Psoas muscle (tissue), 8 donors: ENCODE measurements at regions of chr10 and their contacts with region 1.

Region 1: DNA sequence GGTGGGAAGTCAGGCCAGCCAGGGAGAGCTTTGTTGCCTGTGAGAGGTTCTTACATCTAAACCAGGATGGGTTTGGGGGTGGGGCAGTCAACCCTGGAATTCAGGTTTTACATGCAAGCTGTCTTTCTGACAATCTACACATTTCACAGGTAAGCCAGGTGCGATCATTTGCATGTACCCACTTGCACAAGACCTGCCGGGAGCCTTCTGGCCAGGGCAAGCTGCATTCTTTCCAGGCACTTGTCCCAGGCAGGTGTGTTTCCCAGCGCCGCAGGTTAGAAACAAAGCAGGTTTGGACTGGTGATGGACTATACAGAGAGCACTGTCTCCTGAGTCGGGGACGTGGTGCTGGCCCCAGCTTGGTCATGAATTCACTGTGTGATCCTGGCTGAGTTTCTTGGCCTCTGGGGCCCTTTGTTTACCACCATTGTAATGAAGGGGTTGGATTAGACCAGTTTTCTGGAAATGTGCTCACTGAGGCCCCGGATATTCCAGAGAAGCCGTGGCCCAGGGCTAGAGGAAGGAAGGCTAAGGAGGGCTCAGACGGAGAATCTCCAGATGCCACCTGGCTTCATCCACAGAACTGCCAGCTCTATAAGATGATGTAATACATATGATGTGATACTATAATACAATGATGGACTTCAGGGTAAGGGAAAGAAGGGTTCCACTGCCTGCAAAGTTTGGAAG is 205.2 kb upstream of the SVIL start:
- DNase-seq: no peak
- ATAC-seq: no peak
- H3K4me3 ChIP-seq: no peak overlapping the region
- H3K27ac ChIP-seq: peak overlapping the region; percentile 6
- H3K4me1 ChIP-seq: peaks cover 25% of the 10 kb centered on the region
- H3K27me3 ChIP-seq: no peaks in the 10 kb centered on the region
- CTCF ChIP-seq: no peak

Region 2: GRCh38 chr10:29239569-29240472 is 600.1 kb before region 1 on chr10:
- intact Hi-C with region 1: loop called in 1 of 2 experiments (anchors 10 kb)
- DNase-seq: no peak
- ATAC-seq: peak in 1 of 4 donors; percentile 49
- H3K4me3 ChIP-seq: no peak overlapping the region
- H3K27ac ChIP-seq: no peak overlapping the region
- H3K4me1 ChIP-seq: no peaks in the 10 kb centered on the region
- H3K27me3 ChIP-seq: no peaks in the 10 kb centered on the region
- CTCF ChIP-seq: peak; percentile 33

Region 3: DNA sequence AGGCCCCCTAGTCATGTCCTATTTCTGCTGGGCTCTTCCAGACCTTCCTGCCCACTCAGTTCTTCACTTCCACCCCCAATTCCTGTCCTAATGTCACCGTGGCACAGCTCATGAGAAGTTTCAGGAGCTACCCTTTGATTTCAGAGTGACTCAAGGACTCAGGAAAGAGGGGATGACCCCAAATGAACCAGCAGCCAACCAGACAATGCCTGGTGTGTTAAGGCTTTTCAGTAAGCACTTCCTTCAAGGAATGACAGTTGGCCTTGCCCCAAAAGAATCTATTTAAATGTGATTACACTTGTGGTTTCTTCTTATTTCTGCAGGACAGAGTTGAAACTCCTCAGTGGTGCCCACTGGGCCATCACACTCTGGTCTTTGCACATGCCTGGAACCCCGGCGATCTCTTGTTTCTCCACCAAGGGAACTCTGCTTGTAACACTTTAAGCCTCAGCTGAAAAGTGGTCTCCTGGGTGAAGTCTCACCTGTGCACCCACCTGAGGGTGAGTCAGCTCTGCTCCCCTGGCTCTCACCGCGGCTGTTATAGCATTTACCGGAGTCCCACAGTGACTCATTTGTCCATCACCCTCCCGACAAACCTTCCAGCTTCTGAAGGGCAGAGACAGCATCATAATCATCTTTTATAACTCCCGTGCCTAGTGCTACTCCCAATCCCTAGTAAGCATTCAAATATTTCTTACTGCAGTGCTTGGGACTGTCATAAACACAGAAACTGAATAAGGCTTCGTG is 82.2 kb before region 1 on chr10:
- intact Hi-C with region 1: no loop called
- DNase-seq: no peak
- ATAC-seq: no peak
- H3K4me3 ChIP-seq: no peak overlapping the region
- H3K27ac ChIP-seq: no peak overlapping the region
- H3K4me1 ChIP-seq: no peaks in the 10 kb centered on the region
- H3K27me3 ChIP-seq: no peaks in the 10 kb centered on the region
- CTCF ChIP-seq: no peak

Region 4: GRCh38 chr10:29895456-29895855 is 55.5 kb after region 1 on chr10:
- intact Hi-C with region 1: no loop called
- DNase-seq: peak; percentile 60 to 71
- ATAC-seq: peak in 3 of 4 donors; percentile 45 to 62 (median 60)
- H3K4me3 ChIP-seq: no peak overlapping the region
- H3K27ac ChIP-seq: no peak overlapping the region
- H3K4me1 ChIP-seq: no peaks in the 10 kb centered on the region
- H3K27me3 ChIP-seq: no peaks in the 10 kb centered on the region
- CTCF ChIP-seq: no peak

Region 5: GRCh38 chr10:30359373-30360206 is 519.6 kb after region 1 on chr10:
- intact Hi-C with region 1: no loop called
- DNase-seq: peak in 1 of 2 donors; percentile 50
- ATAC-seq: peak in 3 of 4 donors; percentile 71 to 76 (median 75)
- H3K4me3 ChIP-seq: no peak overlapping the region
- H3K27ac ChIP-seq: no peak overlapping the region
- H3K4me1 ChIP-seq: no peaks in the 10 kb centered on the region
- H3K27me3 ChIP-seq: no peaks in the 10 kb centered on the region
- CTCF ChIP-seq: peak; percentile 57